CD4-positive, alpha-beta memory T cell (primary cell): ENCODE measurements at regions of chr1 and their contacts with region 1.

Region 1: GRCh38 chr1:89578151-89578550 is 53.5 kb downstream of the LRRC8B start:
- DNase-seq: no peak
- H3K4me3 ChIP-seq: no peak overlapping the region
- H3K4me3 Mint-ChIP-seq: no peak overlapping the region
- H3K27ac ChIP-seq: no peak overlapping the region
- H3K27ac Mint-ChIP-seq: no peak overlapping the region
- H3K4me1 ChIP-seq: no peaks in the 10 kb centered on the region
- H3K4me1 Mint-ChIP-seq: peaks cover 0 to 7% (median 4%) of the 10 kb centered on the region in 4 donors
- H3K27me3 ChIP-seq: no peaks in the 10 kb centered on the region
- H3K27me3 Mint-ChIP-seq: no peaks in the 10 kb centered on the region

Region 2: GRCh38 chr1:89547563-89548485 is 30.3 kb before region 1 on chr1:
- CTCF ChIA-PET with region 1: no interaction called
- POLR2A ChIA-PET with region 1: no interaction called
- intact Hi-C with region 1: loop called (anchors 5 kb)
- DNase-seq: no peak
- H3K4me3 ChIP-seq: no peak overlapping the region
- H3K4me3 Mint-ChIP-seq: no peak overlapping the region
- H3K27ac ChIP-seq: no peak overlapping the region
- H3K27ac Mint-ChIP-seq: no peak overlapping the region
- H3K4me1 ChIP-seq: peaks cover 45% of the 10 kb centered on the region
- H3K4me1 Mint-ChIP-seq: peaks cover 38 to 63% (median 53%) of the 10 kb centered on the region in 4 donors
- H3K27me3 ChIP-seq: no peaks in the 10 kb centered on the region
- H3K27me3 Mint-ChIP-seq: no peaks in the 10 kb centered on the region

Region 3: GRCh38 chr1:89605692-89606091 is 27.5 kb after region 1 on chr1:
- CTCF ChIA-PET with region 1: interaction called, 23 read pairs
- POLR2A ChIA-PET with region 1: interaction called, 5 read pairs
- intact Hi-C with region 1: no loop called
- DNase-seq: no peak
- H3K4me3 ChIP-seq: peak overlapping the region in 1 of 2 donors; percentile 0
- H3K4me3 Mint-ChIP-seq: peak overlapping the region in 6 of 8 donors; percentile 29 to 97 (median 64)
- H3K27ac ChIP-seq: peak overlapping the region; percentile 84
- H3K27ac Mint-ChIP-seq: peak overlapping the region; percentile 98 to 100 (median 99)
- H3K4me1 ChIP-seq: peaks cover 95% of the 10 kb centered on the region
- H3K4me1 Mint-ChIP-seq: peaks cover 73 to 98% (median 87%) of the 10 kb centered on the region in 4 donors
- H3K27me3 ChIP-seq: no peaks in the 10 kb centered on the region
- H3K27me3 Mint-ChIP-seq: no peaks in the 10 kb centered on the region

Region 4: GRCh38 chr1:90027281-90027680 is 449.1 kb after region 1 on chr1:
- CTCF ChIA-PET with region 1: no interaction called
- POLR2A ChIA-PET with region 1: no interaction called
- intact Hi-C with region 1: no loop called
- DNase-seq: no peak
- H3K4me3 ChIP-seq: no peak overlapping the region
- H3K4me3 Mint-ChIP-seq: no peak overlapping the region
- H3K27ac ChIP-seq: no peak overlapping the region
- H3K27ac Mint-ChIP-seq: no peak overlapping the region
- H3K4me1 ChIP-seq: no peaks in the 10 kb centered on the region
- H3K4me1 Mint-ChIP-seq: peaks cover 0 to 2% (median 0%) of the 10 kb centered on the region in 4 donors
- H3K27me3 ChIP-seq: no peaks in the 10 kb centered on the region
- H3K27me3 Mint-ChIP-seq: no peaks in the 10 kb centered on the region